A549 (cell line): ENCODE measurements at regions of chr12 and their contacts with region 1.

Region 1: GRCh38 chr12:89461649-89462612 is 62.7 kb downstream of the GALNT4 start:
- DNase-seq: peak; percentile 51 to 64
- ATAC-seq: peak; percentile 91 to 95
- H3K4me3 ChIP-seq: no peak overlapping the region
- H3K27ac ChIP-seq: no peak overlapping the region
- H3K4me1 ChIP-seq: no peaks in the 10 kb centered on the region
- CTCF ChIP-seq: peak; percentile 86
- EP300 ChIP-seq: no peak
- POLR2A ChIP-seq: no peak
- RAD21 ChIP-seq: peak; percentile 88 to 91

Region 2: GRCh38 chr12:89040146-89040964 is 421.6 kb before region 1 on chr12:
- CTCF ChIA-PET with region 1: interaction called, 29 read pairs
- POLR2A ChIA-PET with region 1: no interaction called
- DNase-seq: no peak
- ATAC-seq: no peak
- H3K4me3 ChIP-seq: no peak overlapping the region
- H3K27ac ChIP-seq: no peak overlapping the region
- H3K4me1 ChIP-seq: no peaks in the 10 kb centered on the region
- CTCF ChIP-seq: no peak
- EP300 ChIP-seq: no peak
- POLR2A ChIP-seq: no peak
- RAD21 ChIP-seq: no peak

Region 3: DNA sequence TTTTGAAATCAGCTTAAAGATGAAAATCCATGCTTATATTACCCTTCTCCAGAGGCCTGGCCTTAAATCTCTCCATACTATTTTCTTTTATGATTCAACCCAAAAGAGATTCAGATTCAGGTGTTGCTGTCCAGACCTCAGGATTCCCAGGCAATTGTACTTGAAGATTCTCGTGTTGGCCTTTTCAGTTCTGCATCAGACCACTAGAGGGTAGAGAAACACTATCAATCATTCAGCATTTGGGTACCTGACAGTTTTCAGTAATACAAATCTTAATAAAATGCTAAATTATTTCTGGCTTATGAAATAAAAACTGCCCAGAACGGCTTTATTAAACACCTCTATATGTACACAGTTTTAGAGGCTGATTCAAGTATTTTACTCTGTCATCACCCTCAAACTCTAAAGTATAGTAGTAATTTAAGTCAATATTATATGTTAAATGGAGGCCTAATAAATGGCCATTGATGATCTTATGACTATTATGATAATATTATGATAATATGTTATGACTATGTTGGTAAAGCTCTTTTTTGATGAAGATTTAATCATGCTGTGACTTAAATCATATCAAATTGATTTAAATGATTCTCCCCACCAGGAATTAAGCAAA is 410.8 kb before region 1 on chr12:
- CTCF ChIA-PET with region 1: interaction called, 30 read pairs
- POLR2A ChIA-PET with region 1: no interaction called
- DNase-seq: peak; percentile 51 to 74
- ATAC-seq: peak; percentile 80 to 92; a peak in 5 of 6 replicates
- H3K4me3 ChIP-seq: no peak overlapping the region
- H3K27ac ChIP-seq: no peak overlapping the region
- H3K4me1 ChIP-seq: no peaks in the 10 kb centered on the region
- CTCF ChIP-seq: peak; percentile 94
- EP300 ChIP-seq: no peak
- POLR2A ChIP-seq: no peak
- RAD21 ChIP-seq: peak; percentile 95 to 98

Region 4: DNA sequence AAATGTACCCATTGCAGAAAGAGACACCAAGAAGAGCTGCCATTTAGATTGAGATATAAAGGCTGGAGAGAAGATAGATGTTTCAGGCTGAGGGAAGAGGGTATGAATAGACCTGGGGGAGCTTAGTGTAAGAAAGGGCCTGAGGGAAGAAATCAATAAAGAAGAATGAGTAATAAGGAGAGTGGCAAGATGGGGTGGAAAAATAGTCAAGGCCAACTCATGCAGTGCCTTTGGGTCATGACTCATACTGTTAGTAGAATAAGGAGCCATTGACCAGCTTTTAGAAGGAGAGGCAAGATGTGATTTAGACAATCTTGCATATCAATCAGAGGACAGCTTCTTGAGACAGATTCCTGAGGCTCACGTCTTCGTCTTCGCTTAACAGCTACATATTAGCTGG is 397.2 kb before region 1 on chr12:
- CTCF ChIA-PET with region 1: interaction called, 17 read pairs
- POLR2A ChIA-PET with region 1: no interaction called
- DNase-seq: peak in 1 of 2 experiments; percentile 6
- ATAC-seq: no peak
- H3K4me3 ChIP-seq: no peak overlapping the region
- H3K27ac ChIP-seq: no peak overlapping the region
- H3K4me1 ChIP-seq: no peaks in the 10 kb centered on the region
- CTCF ChIP-seq: no peak
- EP300 ChIP-seq: no peak
- POLR2A ChIP-seq: no peak
- RAD21 ChIP-seq: no peak

Region 5: DNA sequence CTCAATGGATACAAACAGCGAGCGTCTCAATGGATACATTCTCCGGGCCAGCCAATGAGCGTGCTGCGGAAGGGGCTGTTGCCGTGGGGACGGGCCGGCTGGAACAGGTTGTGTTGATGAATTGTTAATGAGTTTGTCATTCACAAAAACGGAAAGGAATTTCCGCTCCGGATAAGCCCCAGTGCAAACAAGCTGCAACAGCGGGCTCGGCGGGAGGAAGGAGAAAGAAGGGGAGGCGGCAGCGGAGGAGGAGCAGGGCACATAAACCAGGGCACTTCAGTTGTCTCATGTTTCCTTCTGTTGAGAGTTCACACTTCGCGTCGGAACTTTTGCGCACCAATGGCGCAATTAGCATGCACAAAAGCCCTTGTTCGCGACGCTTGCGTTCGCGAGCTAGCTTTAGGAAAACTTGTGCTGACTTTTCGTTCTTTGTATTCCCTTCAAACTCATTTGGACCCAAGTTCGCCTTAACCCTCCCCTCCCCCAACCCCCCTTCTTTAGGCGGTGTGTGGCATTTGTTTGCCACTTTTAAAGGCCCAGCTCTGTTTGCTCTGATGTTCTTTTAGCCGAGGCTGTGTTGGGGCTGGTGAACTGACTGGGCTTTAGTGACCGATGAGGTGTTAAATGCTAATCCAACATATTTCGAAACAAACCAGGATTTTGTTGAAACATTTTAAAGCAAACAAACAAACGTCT is 109.3 kb before region 1 on chr12 and contains the start of gene DUSP6:
- CTCF ChIA-PET with region 1: interaction called, 11 read pairs
- POLR2A ChIA-PET with region 1: interaction called, 12 read pairs
- DNase-seq: peak; percentile 98 to 99
- ATAC-seq: peak; percentile 80 to 87
- H3K4me3 ChIP-seq: peak within 1 kb of the TSS; percentile 70
- H3K27ac ChIP-seq: peak within 1 kb of the TSS; percentile 98 to 99
- H3K4me1 ChIP-seq: peaks cover 30% of the 10 kb centered on the region
- CTCF ChIP-seq: no peak
- EP300 ChIP-seq: peak in 1 of 2 experiments; percentile 39; a peak in 1 of 5 replicates
- POLR2A ChIP-seq: peak; percentile 37
- RAD21 ChIP-seq: peak in 1 of 2 experiments; percentile 17; a peak in 1 of 5 replicates
- polyA plus RNA-seq, gene DUSP6: 27.0 and 31.4 TPM in 2 replicates

Region 6: DNA sequence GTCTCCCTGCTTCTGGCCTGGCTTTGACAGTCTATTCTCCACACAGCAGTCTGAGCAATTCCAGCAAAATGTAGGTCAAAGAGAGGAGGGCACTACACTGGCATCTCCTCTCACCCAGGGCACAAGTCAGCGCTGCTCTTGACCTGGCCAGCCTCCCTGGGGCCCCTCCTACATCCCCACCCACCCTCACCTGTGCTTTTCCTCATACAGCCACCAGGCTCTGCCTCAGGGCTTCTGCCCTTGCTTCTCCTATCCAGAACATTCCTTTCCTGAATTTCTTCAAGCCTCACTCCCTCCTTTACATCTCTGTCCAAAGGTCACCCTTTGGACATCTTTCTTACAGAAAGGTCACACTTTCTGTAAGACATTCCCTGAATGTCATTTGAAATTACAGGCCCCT is 29.0 kb after region 1 on chr12:
- CTCF ChIA-PET with region 1: interaction called, 17 read pairs
- POLR2A ChIA-PET with region 1: no interaction called
- DNase-seq: no peak
- ATAC-seq: no peak
- H3K4me3 ChIP-seq: no peak overlapping the region
- H3K27ac ChIP-seq: no peak overlapping the region
- H3K4me1 ChIP-seq: peaks cover 15% of the 10 kb centered on the region
- CTCF ChIP-seq: no peak
- EP300 ChIP-seq: no peak
- POLR2A ChIP-seq: no peak
- RAD21 ChIP-seq: no peak

Region 7: DNA sequence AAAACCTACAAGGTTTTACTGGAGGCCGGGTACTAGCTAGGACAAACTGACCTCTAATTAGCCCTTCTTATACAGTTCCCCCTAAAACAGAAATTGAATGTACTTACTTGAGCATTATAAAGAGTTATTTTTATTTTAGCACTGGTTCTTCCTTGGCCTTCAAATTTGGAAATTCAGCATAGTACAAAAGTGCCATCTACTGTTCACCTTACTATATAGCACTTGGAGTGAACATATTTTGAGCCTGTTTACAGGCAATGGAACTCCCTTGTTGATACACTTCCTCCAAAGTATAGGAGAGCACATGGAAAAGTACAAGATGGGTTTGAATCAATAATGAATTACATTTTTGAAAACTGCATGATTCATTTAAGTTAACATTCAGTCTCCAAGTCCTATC is 67.8 kb after region 1 on chr12:
- CTCF ChIA-PET with region 1: interaction called, 12 read pairs
- POLR2A ChIA-PET with region 1: no interaction called
- DNase-seq: peak; percentile 66 to 67
- ATAC-seq: no peak
- H3K4me3 ChIP-seq: no peak overlapping the region
- H3K27ac ChIP-seq: peak overlapping the region in 1 of 2 experiments; percentile 31; a peak in 1 of 6 replicates
- H3K4me1 ChIP-seq: peaks cover 10% of the 10 kb centered on the region; the same call in 2 of the 3 replicates
- CTCF ChIP-seq: peak; percentile 84
- EP300 ChIP-seq: no peak
- POLR2A ChIP-seq: no peak
- RAD21 ChIP-seq: peak; percentile 89 to 92